Dendritic cell treated with granulocyte-macrophage colony-stimulating factor and Interleukin-4, amounts not matched to agents 40 ng/mL and 50 ng/mL, for 4 days (primary cell): ENCODE measurements at regions of chr6 and their contacts with region 1.

Region 1: GRCh38 chr6:79078075-79079025 is at the start of gene PHIP:
- H3K4me3 Mint-ChIP-seq: peak within 1 kb of the TSS; percentile 92
- H3K27ac Mint-ChIP-seq: peak within 1 kb of the TSS; percentile 99
- H3K4me1 Mint-ChIP-seq: peaks cover 35% of the 10 kb centered on the region
- H3K27me3 Mint-ChIP-seq: no peaks in the 10 kb centered on the region

Region 2: DNA sequence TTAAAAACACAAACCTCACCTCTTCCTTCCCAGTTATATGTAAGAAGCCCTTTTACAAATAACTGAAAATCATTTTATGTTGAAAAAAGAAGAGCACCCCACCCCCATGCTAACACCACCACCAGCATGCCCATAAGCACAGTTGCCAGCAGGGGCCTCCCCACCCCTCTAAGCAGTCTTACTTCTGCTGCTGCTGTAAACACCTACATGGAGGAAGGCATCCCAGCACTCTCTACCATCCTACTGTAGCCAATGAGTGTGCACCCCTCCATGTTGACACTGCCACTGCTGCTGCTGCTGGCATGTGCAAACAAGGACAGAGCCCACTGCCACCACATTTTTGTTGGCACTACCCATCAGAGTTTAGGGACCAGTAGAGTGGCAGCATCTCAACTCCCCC is 49.3 kb after region 1 on chr6:
- intact Hi-C with region 1: no loop called
- H3K4me3 Mint-ChIP-seq: no peak overlapping the region
- H3K27ac Mint-ChIP-seq: no peak overlapping the region
- H3K4me1 Mint-ChIP-seq: no peaks in the 10 kb centered on the region
- H3K27me3 Mint-ChIP-seq: no peaks in the 10 kb centered on the region

Region 3: DNA sequence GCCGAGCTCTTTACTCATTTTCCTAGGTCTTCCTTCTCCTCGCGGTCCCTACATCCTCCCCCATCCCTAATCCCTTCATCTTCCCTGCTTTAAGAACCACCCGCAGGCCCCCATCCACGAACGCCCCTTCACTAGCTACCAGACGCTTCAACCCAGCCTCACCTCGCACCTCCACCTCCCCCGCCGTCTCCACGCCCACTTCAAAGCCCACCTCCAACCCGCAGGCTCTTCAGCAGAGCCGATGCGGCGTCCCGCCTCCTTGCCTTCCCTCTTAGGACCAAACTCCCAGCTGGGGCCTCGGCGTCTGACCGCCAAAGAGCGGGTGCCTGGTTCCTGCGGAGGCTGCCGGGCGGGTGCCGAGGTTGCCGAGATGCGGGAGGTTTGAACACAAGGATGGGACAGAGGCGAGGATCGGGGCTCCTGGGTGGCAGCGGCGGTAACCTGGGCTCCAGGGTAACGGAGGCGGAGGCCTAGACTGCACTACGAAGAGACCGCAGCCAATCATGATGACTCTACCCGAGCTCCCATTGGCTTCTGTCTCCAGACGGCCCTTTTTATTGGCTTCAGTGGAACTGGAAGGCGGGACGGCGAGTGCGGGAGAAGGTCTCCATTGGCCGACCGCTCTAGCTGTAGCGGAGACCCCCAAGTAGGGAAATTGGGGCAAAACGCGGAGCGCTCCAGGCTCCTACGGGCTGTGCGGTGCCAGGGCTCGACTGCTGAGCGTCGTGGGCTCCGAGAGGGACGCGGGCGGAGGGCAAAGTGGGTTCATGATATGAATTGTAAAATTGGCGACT is 458.8 kb after region 1 on chr6 and contains the start of gene LCA5:
- intact Hi-C with region 1: loop called (anchors 2 kb)
- H3K4me3 Mint-ChIP-seq: no peak within 1 kb of the TSS
- H3K27ac Mint-ChIP-seq: no peak within 1 kb of the TSS
- H3K4me1 Mint-ChIP-seq: no peaks in the 10 kb centered on the region
- H3K27me3 Mint-ChIP-seq: peaks cover 6% of the 10 kb centered on the region